ENCODE measurements at regions of chr10 and their contacts with region 1.

Region 1: GRCh38 chr10:102225646-102226541 is at the start of gene ELOVL3:
- DNase-seq: peak; percentile 91 to 92
- H3K4me3 ChIP-seq: peak within 1 kb of the TSS; percentile 17 to 50 (median 26); a peak in 5 of 8 replicates
- H3K27ac ChIP-seq: no peak within 1 kb of the TSS
- H3K4me1 ChIP-seq: peaks cover 0 to 4% (median 0%) of the 10 kb centered on the region in 4 experiments; a peak in 3 of 7 replicates
- H3K27me3 ChIP-seq: peaks cover 28 to 55% (median 49%) of the 10 kb centered on the region in 4 experiments
- CTCF ChIP-seq: no peak
- EP300 ChIP-seq: peak in 1 of 2 experiments; percentile 6; a peak in 1 of 3 replicates
- POLR2A ChIP-seq: no peak
- RAD21 ChIP-seq: no peak
- total RNA-seq, gene ELOVL3: 0.31 TPM in 1 of 2 replicates, not detected in the other

Region 2: GRCh38 chr10:102167861-102168260 is 58.0 kb before region 1 on chr10:
- CTCF ChIA-PET with region 1: interaction called, 85 read pairs
- POLR2A ChIA-PET with region 1: interaction called, 4 read pairs
- DNase-seq: no peak
- H3K4me3 ChIP-seq: no peak overlapping the region
- H3K27ac ChIP-seq: no peak overlapping the region
- H3K4me1 ChIP-seq: peaks cover 0 to 4% (median 0%) of the 10 kb centered on the region in 4 experiments; a peak in 2 of 7 replicates
- H3K27me3 ChIP-seq: no peaks in the 10 kb centered on the region
- CTCF ChIP-seq: no peak
- EP300 ChIP-seq: no peak
- POLR2A ChIP-seq: no peak
- RAD21 ChIP-seq: no peak

Region 3: DNA sequence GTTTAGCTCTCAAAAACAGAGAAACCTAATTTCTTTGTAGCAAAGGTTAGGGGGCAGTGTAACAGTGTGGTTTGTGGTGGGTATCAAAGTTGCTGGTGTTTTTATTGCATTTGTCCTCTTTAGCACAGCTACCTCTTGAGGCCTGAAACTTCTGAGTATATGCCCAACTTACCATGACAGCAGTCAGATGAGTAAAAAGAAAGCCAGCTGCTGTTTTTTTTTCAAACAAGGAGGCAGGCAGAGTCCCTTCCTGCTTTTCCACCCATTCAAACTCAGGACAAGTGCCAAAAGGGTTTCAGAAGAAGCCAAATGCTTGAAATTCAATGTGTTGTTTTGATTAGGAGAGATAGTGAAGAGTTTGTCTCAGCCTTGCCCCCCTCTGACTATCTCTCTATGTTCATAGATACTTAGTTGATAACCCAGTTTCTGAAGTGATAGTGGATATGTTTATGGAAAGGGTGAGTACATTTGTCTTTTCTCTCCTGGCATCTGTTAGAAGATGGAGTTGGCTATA is 42.5 kb after region 1 on chr10:
- CTCF ChIA-PET with region 1: interaction called, 35 read pairs
- POLR2A ChIA-PET with region 1: no interaction called
- DNase-seq: no peak
- H3K4me3 ChIP-seq: no peak overlapping the region
- H3K27ac ChIP-seq: no peak overlapping the region
- H3K4me1 ChIP-seq: no peaks in the 10 kb centered on the region
- H3K27me3 ChIP-seq: no peaks in the 10 kb centered on the region
- CTCF ChIP-seq: no peak
- EP300 ChIP-seq: no peak
- POLR2A ChIP-seq: no peak
- RAD21 ChIP-seq: no peak

Region 4: DNA sequence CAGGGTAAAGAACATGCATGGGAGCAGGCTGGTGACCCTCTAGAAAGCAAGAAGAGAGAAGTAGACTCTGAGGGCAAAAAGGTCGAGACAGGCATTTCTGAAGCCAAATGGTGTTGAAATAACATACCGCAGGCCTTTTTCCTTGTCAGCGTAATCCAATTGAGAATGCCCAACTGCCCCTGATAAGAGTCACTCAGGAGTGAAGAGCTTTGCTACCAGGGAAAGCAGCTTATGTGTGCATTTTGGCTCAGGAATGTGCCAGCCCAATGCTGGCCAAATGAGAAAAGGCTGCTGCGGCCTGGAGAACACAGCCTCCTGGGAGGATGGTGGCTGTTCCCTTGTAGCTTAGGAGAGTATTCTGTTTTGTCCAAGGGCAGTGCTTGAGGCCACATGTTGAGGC is 108.2 kb after region 1 on chr10:
- CTCF ChIA-PET with region 1: interaction called, 862 read pairs
- POLR2A ChIA-PET with region 1: no interaction called
- DNase-seq: no peak
- H3K4me3 ChIP-seq: no peak overlapping the region
- H3K27ac ChIP-seq: no peak overlapping the region
- H3K4me1 ChIP-seq: no peaks in the 10 kb centered on the region
- H3K27me3 ChIP-seq: peaks cover 0 to 2% (median 0%) of the 10 kb centered on the region in 4 experiments; a peak in 1 of 7 replicates
- CTCF ChIP-seq: no peak
- EP300 ChIP-seq: no peak
- POLR2A ChIP-seq: no peak
- RAD21 ChIP-seq: no peak

Region 5: DNA sequence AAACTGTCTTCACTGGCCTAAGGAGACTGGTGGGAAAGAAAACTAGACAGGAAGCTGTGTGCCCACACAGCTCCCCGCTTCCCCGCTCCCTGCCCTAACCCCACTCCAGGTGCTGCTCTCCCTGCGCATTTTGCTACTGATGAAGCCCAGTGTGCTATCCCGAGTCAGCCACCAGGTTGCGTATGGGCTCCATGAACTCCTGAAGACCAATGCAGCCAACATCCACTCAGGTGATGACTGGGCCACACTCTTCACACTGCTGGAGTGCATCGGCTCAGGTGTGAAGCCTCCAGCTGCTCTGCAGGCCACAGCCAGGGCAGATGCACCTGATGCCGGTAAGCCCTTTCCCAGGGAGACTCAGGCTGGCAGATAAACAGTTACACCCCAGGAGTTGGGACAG is 149.4 kb after region 1 on chr10:
- CTCF ChIA-PET with region 1: interaction called, 52 read pairs
- POLR2A ChIA-PET with region 1: no interaction called
- DNase-seq: no peak
- H3K4me3 ChIP-seq: no peak overlapping the region
- H3K27ac ChIP-seq: no peak overlapping the region
- H3K4me1 ChIP-seq: no peaks in the 10 kb centered on the region
- H3K27me3 ChIP-seq: no peaks in the 10 kb centered on the region
- CTCF ChIP-seq: peak; percentile 41 to 65 (median 60)
- EP300 ChIP-seq: no peak
- POLR2A ChIP-seq: no peak
- RAD21 ChIP-seq: peak; percentile 59 to 72

Region 6: DNA sequence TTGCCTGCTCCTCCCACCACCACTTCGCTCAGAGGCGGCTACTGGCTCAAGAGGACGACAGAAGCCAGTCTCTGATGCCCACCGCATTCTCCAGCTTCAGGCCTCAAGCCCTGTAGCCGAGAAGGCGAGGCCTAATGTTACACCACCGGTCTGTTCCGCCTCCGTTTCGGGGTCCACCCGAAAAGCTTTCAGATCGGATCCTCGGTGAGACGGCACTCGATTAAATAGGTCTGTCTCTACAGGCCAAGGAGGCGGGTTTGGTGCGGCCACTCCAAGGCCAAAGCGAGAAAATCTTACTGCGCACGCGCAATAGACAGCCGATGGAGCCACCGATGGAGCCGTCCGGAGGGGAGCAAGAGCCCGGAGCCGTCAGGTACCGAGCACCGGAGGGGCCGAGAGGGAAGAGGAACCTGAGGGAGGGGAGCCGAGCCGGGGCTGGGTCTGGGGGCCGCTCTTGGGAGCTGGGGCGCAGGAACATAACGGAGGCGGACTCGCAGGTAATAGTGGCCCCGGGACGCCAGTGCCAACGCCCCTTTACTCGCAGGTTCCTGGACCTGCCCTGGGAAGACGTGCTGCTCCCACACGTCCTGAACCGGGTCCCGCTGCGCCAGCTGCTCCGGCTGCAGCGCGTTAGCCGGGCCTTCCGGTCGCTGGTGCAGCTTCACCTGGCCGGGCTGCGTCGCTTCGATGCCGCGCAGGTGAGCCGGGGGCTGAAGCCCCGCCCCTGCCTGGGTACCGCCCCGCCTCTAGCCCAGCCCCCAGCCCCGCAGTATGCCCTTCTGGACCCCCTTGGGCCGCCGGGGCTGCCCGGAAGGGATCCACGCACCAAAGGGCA is 195.1 kb after region 1 on chr10 and contains the start of gene FBXL15:
- CTCF ChIA-PET with region 1: interaction called, 31 read pairs
- POLR2A ChIA-PET with region 1: interaction called, 8 read pairs
- DNase-seq: peak; percentile 90 to 98
- H3K4me3 ChIP-seq: peak within 1 kb of the TSS; percentile 74 to 92 (median 80)
- H3K27ac ChIP-seq: peak within 1 kb of the TSS; percentile 81; the same call in 1 of the 2 replicates
- H3K4me1 ChIP-seq: peaks cover 0 to 24% (median 10%) of the 10 kb centered on the region in 4 experiments; a peak in 5 of 7 replicates
- H3K27me3 ChIP-seq: no peaks in the 10 kb centered on the region
- CTCF ChIP-seq: no peak; a peak in 1 of 4 replicates
- EP300 ChIP-seq: peak in 1 of 2 experiments; percentile 50; a peak in 1 of 3 replicates
- POLR2A ChIP-seq: peak in 1 of 2 experiments; percentile 57; a peak in 1 of 3 replicates
- RAD21 ChIP-seq: no peak
- total RNA-seq, gene FBXL15: 11.3 and 15.4 TPM in 2 replicates

Measured in H1 (cell line).